Sciatic nerve (tissue), 2 donors: ENCODE measurements at regions of chr18 and their contacts with region 1.

Region 1: DNA sequence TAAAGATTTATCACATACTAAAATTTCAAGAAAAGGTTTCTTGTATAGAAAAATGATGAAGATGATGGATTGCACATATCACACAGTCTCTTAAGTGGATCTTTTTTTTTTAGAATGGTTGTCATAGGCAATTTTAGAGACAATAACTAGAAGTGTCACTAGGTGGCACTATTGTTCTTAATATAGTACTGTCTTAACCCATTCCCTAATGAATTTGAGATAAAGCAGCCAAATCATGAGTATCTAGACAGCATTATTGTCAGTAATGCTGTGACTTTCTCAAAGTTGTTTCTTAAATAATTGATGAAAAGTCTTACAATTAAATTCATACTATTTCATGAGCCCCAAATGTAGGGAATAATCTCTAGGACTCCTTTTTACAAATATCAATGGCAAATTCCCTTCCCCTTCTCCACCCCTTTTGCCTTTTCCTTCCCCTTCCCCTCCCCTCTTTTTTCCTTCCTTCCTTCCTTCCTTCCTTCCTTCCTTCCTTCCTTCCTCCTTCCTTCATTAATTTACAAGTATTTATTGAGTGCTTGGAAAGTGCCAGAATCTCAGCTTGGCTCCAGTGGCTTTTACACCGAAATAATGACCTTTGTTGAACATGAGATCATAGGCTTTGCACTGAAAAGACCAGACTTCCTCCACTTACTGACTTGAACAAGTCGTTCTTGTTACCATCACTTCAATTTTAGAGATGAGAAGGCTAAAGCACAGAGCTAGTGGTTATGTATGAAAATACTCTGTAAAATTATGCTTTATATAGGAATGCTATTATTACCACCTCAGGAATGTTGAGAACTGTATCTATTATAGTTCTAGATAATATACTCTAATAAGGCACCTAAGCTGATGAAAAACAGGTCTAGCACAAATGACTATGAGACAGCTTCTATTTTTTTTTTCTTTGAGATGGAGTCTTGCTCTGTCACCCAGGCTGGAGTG is 19.8 kb downstream of the MYL12B start:
- DNase-seq: no peak
- ATAC-seq: peak; percentile 92

Region 2: DNA sequence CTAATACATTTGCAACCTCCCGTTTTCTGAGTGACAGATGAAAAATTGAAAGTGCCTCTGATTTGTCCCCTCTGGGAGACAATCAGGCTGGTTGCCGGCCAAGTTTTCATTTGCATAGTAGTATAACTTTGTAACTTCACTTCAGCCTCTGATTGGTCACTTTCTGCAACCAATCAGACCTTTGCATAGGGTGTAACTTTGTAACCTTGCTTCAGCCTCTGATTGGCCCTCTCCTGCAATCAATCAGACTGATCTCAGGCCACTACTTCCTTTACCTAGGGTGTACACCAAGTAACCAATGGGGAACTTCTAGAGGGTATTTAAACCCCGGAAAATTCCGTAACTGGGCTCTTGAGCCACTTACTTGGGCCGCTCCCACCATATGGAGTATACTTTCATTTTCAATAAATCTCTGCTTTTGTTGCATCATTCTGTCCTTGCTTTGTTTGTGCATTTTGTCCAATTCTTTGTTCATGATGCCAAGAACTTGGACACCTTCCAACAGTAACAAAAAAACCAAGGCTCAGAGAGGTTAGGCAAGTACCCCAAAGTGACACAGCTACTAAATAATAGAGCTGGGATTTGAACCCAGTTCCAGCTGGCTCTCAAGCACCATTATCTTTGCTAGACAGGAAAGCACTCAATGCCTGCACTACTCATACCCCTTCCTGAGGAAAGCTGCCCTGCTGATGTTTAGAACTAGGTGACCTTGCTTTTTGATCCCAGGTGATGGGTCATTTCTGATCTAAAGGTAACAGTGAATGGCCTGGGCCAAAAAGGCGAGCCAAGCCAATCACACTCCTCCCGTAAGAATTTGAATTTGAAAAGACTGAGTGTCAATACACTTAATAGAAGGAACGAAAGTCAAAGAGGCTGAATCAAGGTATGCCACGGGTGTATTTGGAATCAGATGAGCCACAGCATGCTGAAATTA is 51.1 kb before region 1 on chr18:
- intact Hi-C with region 1: no loop called
- DNase-seq: no peak
- ATAC-seq: no peak

Region 3: GRCh38 chr18:3447895-3448837 is 166.4 kb after region 1 on chr18:
- intact Hi-C with region 1: loop called (anchors 10 kb)
- DNase-seq: peak; percentile 96
- ATAC-seq: peak; percentile 86

Region 4: DNA sequence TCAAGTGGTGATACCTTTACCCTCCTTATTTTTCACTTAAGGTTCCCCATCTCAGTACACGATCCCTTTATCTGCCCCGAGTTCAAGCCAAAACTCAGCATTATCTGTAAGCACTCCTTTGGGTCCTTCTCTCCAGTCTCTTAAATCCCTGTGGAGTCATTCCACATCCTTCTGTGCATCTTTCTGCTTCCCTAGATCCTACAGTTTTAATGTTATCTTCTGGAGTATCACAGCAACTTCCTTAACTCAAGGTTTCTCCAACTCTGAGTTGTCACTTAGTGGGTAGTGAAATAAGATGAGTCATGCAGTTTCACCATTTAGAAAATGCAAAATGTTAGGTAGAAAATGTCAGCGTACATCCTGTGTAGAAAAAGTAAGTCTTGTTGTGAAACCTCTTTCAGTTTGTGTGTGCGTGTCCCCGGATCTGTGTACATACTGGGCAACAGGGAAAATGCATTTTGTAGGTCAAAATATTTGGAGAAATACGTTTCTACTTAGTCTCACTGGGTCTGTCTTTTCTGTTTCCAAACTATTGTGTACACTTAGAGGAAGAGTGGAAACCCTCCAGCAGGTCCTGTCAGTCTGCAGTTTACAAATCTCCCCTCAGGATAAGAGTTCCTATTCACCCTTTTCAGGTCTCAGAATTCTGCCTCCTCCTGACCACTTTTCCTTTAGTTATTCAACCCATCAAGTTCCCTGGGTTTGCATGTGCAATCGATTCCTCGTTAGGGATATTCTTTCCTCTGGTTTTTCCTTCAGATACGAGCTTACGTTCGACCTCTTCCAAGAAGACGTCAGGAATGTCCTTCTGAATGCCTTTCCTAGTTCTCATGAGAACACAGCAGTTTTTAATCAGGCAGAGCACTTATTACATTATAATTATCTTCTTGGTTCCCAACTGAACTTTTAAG is 323.0 kb after region 1 on chr18:
- intact Hi-C with region 1: loop called (anchors 10 kb)
- DNase-seq: no peak
- ATAC-seq: peak; percentile 82

Region 5: GRCh38 chr18:3665780-3666525 is 384.2 kb after region 1 on chr18:
- intact Hi-C with region 1: loop called (anchors 5 kb)
- DNase-seq: peak; percentile 90
- ATAC-seq: peak; percentile 94